H1 (cell line): ENCODE measurements at regions of chr1 and their contacts with region 1.

Region 1: DNA sequence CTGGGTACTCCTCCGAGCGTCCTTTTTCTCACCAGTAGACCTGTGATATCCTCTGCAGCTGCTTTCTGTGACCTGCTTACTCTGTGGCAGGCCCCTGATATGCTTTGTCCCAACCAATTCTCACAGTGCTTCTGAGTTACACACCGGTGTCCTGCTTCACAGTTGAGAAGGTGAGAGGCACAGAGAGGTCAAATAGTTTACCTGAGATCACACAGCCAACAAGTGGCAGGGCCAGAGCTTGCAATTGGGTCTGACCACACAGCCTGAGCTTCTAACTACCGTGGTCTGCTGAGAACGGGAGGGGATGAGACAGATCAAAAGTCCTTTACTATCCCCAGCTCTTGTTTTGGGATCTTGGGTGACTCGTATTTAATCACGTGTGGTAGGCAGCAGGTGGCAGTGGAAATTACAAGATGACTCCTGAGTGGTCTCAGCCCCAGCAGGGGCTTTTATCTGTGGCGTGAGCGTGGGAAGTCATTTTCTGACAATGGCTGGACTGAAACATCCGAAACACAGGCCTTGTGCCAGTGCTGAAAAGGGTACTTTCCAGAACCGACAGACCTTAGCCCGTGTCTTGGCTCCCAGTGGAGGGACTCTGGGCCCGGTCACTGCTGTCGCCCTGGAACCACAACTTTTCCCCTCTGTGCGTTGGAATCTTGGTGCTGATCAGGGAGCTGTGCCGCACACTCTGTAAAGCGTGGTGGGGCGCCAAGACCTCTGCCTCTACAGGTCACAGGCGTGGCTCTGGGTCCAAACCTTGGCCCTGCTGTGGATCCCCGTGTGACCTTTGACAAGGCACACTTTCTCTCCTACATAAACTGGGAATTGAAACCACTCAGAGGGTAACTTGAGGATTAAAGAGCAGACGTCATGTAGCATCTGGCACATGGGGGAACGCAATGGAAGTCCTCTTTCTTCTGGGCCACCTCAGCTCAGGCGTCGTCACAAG is 11.9 kb downstream of the THEMIS2 start:
- DNase-seq: no peak
- H3K4me3 ChIP-seq: no peak overlapping the region
- H3K27ac ChIP-seq: no peak overlapping the region
- H3K4me1 ChIP-seq: no peaks in the 10 kb centered on the region
- H3K27me3 ChIP-seq: no peaks in the 10 kb centered on the region
- CTCF ChIP-seq: no peak
- EP300 ChIP-seq: no peak
- POLR2A ChIP-seq: no peak
- RAD21 ChIP-seq: no peak

Region 2: GRCh38 chr1:27760426-27760825 is 123.9 kb before region 1 on chr1:
- CTCF ChIA-PET with region 1: no interaction called
- POLR2A ChIA-PET with region 1: no interaction called
- DNase-seq: no peak
- H3K4me3 ChIP-seq: no peak overlapping the region
- H3K27ac ChIP-seq: no peak overlapping the region
- H3K4me1 ChIP-seq: no peaks in the 10 kb centered on the region
- H3K27me3 ChIP-seq: no peaks in the 10 kb centered on the region
- CTCF ChIP-seq: no peak
- EP300 ChIP-seq: no peak
- POLR2A ChIP-seq: no peak
- RAD21 ChIP-seq: peak; percentile 5 to 34; a peak in 2 of 4 replicates

Region 3: DNA sequence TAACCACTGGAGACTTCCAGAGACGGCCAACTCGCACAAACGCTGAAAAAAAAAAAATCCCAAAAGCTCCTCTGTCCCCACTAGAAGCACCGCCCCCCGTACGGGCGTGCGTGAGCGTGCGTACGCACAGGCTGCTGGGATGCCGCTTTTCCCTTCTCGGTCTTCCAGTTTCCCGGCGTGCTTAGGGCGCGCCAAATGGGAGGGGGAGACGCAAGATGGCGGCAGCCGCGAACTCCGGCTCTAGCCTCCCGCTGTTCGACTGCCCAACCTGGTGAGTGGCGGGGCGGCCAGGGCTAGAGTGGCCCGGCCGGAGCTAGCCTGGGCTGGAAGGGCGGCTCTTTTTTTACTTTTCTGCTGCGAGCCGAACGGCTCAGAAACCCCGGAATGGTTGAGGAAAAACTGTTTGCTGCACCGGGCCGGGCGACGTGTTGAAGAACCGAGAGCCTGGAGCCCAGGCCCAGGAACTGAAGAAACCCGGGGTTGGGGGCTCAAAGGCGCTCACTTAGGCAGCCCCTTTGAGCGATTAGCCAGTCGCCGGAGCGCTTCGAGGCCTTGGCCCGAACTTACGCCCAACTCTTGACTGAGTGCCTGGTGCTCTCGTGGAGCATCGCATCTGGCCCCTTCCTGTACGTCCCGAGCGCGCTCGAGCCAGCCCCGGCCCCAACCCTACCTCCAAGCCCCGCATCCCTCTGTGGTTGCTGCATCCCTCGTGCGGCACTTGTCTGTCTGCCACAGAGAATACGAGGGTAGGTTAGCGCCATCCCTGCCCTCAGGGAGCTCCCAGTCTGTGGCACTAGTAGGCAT is 53.5 kb before region 1 on chr1 and contains the start of gene PPP1R8:
- CTCF ChIA-PET with region 1: no interaction called
- POLR2A ChIA-PET with region 1: no interaction called
- DNase-seq: peak; percentile 81 to 90
- H3K4me3 ChIP-seq: peak within 1 kb of the TSS; percentile 69 to 96 (median 82)
- H3K27ac ChIP-seq: peak within 1 kb of the TSS; percentile 95
- H3K4me1 ChIP-seq: no peaks in the 10 kb centered on the region; a peak in 2 of 7 replicates
- H3K27me3 ChIP-seq: no peaks in the 10 kb centered on the region
- CTCF ChIP-seq: no peak
- EP300 ChIP-seq: no peak
- POLR2A ChIP-seq: peak; percentile 97 to 98
- RAD21 ChIP-seq: no peak; a peak in 1 of 4 replicates
- total RNA-seq, gene PPP1R8: 50.5 and 51.8 TPM in 2 replicates

Region 4: DNA sequence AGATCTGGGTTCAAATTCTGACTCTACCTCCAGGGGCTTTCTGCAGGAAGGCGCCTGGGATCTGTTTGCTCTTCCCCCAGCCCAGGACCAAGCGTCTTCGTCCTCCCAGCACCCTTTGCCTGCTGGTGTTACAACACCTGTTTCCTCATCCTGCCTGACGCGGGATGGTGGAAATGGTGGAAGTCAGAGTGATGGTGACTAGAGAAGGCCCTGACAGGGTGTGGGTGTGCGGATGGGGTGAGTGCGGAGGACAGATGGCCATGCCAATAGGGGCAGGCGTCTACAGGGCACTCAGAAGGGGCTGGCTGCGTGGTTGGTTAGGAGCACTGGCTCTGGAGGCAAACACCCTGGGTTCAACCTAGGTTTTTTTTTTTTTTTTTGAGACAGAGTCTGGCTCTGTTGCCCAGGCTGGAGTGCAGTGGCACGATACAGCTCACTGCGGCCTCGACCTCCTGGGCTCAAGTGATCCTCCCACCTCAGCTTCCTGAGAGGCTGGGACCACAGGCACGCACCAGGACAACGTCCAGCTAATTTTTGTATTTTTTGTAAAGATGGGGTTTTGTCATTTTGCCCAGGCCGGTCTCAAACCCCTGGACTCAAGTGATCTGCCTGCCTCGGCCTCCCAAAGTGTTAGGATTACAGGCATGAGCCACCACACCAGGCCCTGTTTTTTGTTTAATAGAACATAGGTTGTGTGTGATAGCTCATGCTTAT is 10.5 kb before region 1 on chr1:
- CTCF ChIA-PET with region 1: interaction called, 9 read pairs
- POLR2A ChIA-PET with region 1: interaction called, 10 read pairs
- DNase-seq: no peak
- H3K4me3 ChIP-seq: peak overlapping the region in 2 of 4 experiments; percentile 90 to 91; a peak in 1 of 8 replicates
- H3K27ac ChIP-seq: no peak overlapping the region
- H3K4me1 ChIP-seq: peaks cover 0 to 11% (median 8%) of the 10 kb centered on the region in 4 experiments; a peak in 6 of 7 replicates
- H3K27me3 ChIP-seq: peaks cover 0 to 6% (median 2%) of the 10 kb centered on the region in 4 experiments; a peak in 4 of 7 replicates
- CTCF ChIP-seq: no peak
- EP300 ChIP-seq: no peak
- POLR2A ChIP-seq: no peak
- RAD21 ChIP-seq: no peak

Region 5: DNA sequence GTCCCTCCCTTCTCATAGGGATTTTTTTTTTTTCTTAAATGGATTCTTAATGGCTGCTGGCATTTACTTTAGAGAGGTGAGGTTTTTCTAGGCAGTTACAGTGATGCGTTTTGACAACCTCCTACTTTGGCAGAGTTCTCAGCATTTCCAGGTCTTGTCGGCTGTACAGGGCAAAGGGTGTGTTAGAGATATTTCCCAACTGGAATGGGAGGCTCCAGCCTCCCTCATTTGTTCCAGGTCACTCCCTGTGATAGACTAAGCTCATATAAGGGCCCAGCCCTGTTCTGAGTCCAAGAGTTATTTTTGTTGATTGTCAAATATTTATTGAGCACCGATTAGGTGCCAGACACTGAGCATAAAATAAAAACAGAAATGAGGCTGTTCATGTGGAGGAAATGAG is 67.9 kb after region 1 on chr1:
- CTCF ChIA-PET with region 1: no interaction called
- POLR2A ChIA-PET with region 1: no interaction called
- DNase-seq: no peak
- H3K4me3 ChIP-seq: no peak overlapping the region
- H3K27ac ChIP-seq: no peak overlapping the region
- H3K4me1 ChIP-seq: no peaks in the 10 kb centered on the region
- H3K27me3 ChIP-seq: no peaks in the 10 kb centered on the region
- CTCF ChIP-seq: no peak
- EP300 ChIP-seq: no peak
- POLR2A ChIP-seq: no peak
- RAD21 ChIP-seq: no peak